Activated CD8-positive, alpha-beta T cell treated with anti-CD3 and anti-CD28 coated beads, Interleukin-2, amount 10 ng/mL, durations not matched to agents 7 days and 5 days (primary cell): ENCODE measurements at regions of chr11 and their contacts with region 1.

Region 1: DNA sequence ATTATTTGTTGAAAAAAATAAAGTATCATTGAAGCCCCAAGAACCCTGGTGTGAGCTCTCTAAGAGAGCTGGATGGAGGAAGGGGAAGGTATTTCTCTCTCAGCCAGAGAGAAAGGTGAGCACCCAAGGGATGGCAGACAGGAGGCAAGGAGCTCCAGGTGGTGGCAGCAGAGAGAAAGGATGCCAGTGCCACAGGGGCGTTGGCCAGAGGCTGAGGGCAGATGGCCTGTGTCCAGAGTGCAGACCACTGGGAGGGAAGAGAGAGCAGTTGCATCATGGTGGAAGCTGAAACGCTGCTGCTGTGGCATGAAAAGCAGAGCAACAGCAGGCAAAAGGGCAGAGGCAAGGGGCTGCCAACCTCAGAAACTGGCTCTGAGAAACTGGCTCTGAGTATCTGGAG is 8.5 kb downstream of the SPON1 start:
- DNase-seq: no peak
- ATAC-seq: no peak
- H3K4me3 Mint-ChIP-seq: no peak overlapping the region
- H3K27ac Mint-ChIP-seq: no peak overlapping the region
- H3K4me1 Mint-ChIP-seq: peaks cover 13% of the 10 kb centered on the region
- H3K27me3 Mint-ChIP-seq: peaks cover 25% of the 10 kb centered on the region

Region 2: DNA sequence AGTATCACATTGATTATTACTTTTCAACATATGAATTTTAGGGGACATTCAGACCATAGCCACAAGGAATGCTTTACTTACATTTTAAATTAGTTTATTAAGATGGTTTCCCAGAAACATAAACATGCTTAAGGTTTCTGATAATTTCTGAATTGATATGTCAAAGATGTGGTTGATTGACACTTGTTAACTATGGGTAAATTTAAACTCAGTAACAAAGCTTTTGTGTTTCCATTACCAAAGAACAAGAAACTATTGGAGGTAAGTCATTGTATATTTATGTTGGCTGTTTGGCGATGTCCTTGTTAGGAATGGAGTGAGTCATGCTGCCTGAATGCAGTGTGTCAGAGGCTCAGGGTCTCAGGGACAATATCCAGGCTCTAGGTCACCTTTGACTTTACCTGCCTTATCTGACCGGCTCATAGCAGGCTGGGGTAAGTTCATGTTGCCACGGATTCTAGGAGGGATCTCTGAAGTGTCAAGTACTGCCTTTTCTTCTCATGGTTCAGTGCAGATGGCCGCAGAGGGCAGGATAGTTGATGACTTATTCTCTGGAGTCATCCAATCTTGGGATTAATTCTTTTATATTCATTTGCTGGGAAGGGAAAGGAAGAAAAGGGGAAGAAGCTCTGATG is 44.6 kb after region 1 on chr11:
- CTCF ChIA-PET with region 1: no interaction called
- POLR2A ChIA-PET with region 1: no interaction called
- DNase-seq: no peak
- ATAC-seq: no peak
- H3K4me3 Mint-ChIP-seq: no peak overlapping the region
- H3K27ac Mint-ChIP-seq: no peak overlapping the region
- H3K4me1 Mint-ChIP-seq: no peaks in the 10 kb centered on the region
- H3K27me3 Mint-ChIP-seq: peaks cover 2% of the 10 kb centered on the region

Region 3: DNA sequence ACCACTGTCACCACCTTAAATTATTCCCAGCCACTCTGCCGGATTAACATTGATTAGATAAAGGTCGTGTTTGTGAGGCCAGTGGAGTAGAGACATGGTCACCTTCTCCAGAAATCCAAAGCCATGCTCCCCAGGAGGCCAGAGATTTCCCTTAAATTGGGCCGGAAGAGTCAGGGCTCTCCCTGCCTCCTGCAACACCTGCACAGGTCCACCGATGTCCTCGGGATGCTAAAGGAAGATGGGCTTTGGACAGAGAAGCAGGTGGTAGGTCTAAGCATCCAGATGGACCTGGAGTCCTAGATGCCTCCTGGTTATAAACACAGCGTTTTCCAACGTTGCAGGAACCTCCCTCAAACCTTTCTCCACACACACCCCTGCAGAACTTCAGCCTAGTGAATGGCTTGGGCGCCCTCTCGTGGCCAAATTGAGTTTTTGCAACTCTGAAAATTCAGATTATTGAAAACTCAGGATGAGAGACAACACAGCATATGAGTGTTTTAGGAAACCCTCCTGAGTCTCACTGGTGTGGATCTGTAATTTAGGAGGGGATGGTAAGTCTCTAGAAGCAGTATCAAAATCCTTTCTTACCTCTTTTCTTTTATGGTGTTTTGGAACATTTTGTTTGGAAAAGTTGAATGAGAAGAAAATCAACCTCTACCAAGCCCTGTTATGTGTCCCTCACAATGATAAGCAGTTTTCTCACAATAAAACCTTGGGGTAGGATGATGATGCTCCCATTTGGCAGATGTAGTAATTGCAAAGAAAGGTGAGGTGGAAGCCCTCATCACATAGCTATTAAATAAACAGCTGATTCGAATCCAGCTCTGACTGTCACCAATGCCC is 278.4 kb after region 1 on chr11:
- CTCF ChIA-PET with region 1: interaction called, 11 read pairs
- POLR2A ChIA-PET with region 1: no interaction called
- DNase-seq: peak; percentile 81
- ATAC-seq: peak; percentile 61
- H3K4me3 Mint-ChIP-seq: peak overlapping the region; percentile 45
- H3K27ac Mint-ChIP-seq: no peak overlapping the region
- H3K4me1 Mint-ChIP-seq: peaks cover 24% of the 10 kb centered on the region
- H3K27me3 Mint-ChIP-seq: peaks cover 8% of the 10 kb centered on the region